ENCODE measurements at regions of chr17 and their contacts with region 1.

Region 1: DNA sequence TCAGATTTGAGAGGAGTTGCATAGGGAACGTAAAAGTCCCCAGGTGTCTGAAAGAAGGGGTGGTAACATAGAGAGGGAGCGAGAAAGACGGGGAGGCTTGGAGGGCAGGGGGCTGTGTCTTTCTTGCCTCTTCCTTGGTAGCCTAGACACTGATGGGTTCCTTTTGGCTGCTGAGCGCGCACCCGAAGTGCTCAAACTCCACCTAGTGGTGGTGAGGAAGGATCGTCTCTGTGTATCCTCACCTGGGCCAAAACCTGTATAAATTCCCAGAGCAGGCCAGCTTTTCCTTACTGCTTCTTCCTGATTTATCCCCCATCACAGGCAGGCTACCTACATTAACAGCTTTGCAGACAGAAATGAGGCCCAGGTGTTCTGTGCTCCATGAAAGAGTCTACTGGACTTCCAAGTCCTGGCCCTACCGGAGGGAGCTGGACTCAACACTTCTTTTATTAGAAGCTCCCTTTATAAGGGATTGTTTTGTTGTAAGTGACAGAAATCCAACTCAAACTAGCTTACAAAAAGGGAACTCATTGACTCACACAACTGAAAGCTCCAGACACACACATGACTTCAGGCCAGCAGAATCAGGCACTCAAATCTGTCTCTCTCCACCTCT is 5.5 kb upstream of the SLC25A35 start:
- DNase-seq: peak; percentile 64
- ATAC-seq: peak; percentile 98
- H3K4me3 ChIP-seq: no peak overlapping the region
- H3K27ac ChIP-seq: no peak overlapping the region
- H3K4me1 ChIP-seq: no peaks in the 10 kb centered on the region
- H3K27me3 ChIP-seq: no peaks in the 10 kb centered on the region; the same call in 1 of the 2 replicates
- CTCF ChIP-seq: peak; percentile 80
- POLR2A ChIP-seq: no peak
- RAD21 ChIP-seq: peak; percentile 86

Region 2: DNA sequence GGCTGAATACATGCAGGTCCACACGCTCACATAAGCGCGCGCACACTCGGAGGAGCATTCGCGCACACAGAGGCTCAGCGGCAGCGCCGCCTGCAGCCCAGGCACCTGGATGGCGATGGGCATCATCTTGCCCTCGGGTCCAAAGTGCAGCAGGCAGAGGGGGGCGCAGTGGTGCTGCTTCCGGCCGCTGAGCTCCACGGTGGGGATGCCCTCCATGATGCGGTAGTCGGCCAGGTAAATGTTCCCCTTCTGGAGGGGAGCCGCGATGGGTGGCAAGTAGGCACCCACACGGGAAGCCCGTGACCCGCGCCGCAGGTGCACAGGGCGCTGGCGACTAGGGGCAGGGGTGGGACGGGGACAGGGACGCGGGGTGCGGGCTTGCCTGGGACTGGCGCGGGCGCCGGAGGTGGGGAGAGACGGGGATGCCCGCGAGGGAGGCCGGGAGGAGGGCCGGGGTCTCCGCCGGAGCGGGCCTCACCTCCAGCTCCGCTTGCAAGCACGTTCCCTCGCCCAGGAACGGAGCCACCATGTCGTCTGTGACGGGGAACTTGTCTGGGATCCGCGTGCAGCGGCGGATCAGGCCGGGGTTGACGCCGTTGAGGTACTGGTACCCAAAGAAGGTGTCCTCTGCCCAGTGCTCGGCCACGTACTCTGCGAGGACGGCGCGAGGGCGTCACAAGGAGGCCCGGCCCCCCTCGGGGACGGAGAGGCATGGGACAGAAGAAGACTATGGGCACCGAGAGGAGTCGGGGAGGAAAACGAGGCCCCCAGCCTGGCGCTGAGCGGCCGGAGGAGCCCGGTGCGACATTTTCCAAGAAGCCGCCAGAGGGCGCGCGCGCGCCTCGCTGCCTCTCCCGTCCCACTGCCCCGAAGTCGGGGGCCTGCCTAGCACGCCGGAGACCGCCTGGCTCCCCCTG is 221.2 kb before region 1 on chr17:
- CTCF ChIA-PET with region 1: interaction called, 3 read pairs
- POLR2A ChIA-PET with region 1: no interaction called
- dilution Hi-C with region 1: no loop called
- in situ Hi-C with region 1: loop called (anchors 25 kb)
- intact Hi-C with region 1: no loop called
- DNase-seq: peak; percentile 33
- ATAC-seq: peak; percentile 98
- H3K4me3 ChIP-seq: peak overlapping the region; percentile 48
- H3K27ac ChIP-seq: no peak overlapping the region
- H3K4me1 ChIP-seq: 0 out of 2 replicates have a peak, but pooled peaks cover 1% of the 10 kb centered on the region
- H3K27me3 ChIP-seq: peaks cover 64% of the 10 kb centered on the region
- CTCF ChIP-seq: peak; percentile 77
- POLR2A ChIP-seq: no peak
- RAD21 ChIP-seq: peak; percentile 63

Region 3: DNA sequence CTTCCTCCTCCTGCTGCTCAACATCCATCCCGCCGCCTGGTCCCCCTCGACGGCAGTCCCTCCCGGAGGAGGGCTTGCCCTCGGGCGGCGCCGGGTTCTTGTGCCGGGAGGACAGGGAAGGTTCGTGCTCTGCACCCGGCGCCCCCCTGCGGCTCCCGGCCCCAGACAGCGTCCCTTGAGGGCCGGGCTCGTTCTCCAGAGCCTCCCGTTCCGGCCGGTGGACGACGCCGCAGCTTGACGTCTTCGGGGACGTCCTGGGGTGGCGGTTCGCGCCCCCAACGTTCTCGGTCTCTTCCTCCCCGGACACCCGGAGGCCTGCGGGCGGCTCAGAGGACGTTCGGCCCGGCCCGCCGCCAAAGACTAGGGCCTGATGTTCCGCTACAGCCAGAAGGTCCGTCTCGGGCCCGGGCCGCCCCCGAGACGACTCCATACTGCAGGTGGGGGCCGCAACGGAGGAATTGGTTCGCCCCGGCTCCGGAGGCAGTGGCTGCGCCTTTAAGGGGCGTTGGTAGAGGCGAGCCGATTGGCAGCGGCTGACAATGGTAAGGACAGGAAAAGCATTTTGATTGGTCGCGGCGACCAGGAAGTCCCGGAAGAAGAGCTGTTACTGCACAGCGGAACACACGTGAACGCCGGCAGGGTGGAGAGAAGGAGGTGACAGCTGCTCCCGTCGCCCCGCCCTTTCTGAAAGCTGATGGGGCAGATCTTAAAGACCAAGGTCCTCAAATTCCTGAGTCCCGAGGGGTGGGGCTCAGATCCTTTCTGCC is 110.8 kb before region 1 on chr17 and contains the start of gene BORCS6:
- CTCF ChIA-PET with region 1: interaction called, 5 read pairs
- POLR2A ChIA-PET with region 1: no interaction called
- dilution Hi-C with region 1: no loop called
- in situ Hi-C with region 1: no loop called
- intact Hi-C with region 1: loop called (anchors 5 kb)
- DNase-seq: peak; percentile 98
- ATAC-seq: peak; percentile 49
- H3K4me3 ChIP-seq: peak within 1 kb of the TSS; percentile 74
- H3K27ac ChIP-seq: peak within 1 kb of the TSS; percentile 69
- H3K4me1 ChIP-seq: peaks cover 13% of the 10 kb centered on the region
- H3K27me3 ChIP-seq: no peaks in the 10 kb centered on the region
- CTCF ChIP-seq: no peak
- POLR2A ChIP-seq: peak; percentile 59
- RAD21 ChIP-seq: no peak
- total RNA-seq, gene BORCS6: 2.7 and 3.1 TPM in 2 replicates

Region 4: GRCh38 chr17:8420041-8420934 is 119.6 kb after region 1 on chr17:
- CTCF ChIA-PET with region 1: no interaction called
- POLR2A ChIA-PET with region 1: no interaction called
- dilution Hi-C with region 1: no loop called
- in situ Hi-C with region 1: no loop called
- intact Hi-C with region 1: no loop called
- DNase-seq: peak; percentile 52
- ATAC-seq: peak; percentile 71
- H3K4me3 ChIP-seq: no peak overlapping the region
- H3K27ac ChIP-seq: no peak overlapping the region
- H3K4me1 ChIP-seq: peaks cover 2% of the 10 kb centered on the region; the same call in 1 of the 2 replicates
- H3K27me3 ChIP-seq: peaks cover 15% of the 10 kb centered on the region
- CTCF ChIP-seq: no peak
- POLR2A ChIP-seq: no peak
- RAD21 ChIP-seq: no peak